ENCODE measurements at regions of chrX and their contacts with region 1.

Region 1: DNA sequence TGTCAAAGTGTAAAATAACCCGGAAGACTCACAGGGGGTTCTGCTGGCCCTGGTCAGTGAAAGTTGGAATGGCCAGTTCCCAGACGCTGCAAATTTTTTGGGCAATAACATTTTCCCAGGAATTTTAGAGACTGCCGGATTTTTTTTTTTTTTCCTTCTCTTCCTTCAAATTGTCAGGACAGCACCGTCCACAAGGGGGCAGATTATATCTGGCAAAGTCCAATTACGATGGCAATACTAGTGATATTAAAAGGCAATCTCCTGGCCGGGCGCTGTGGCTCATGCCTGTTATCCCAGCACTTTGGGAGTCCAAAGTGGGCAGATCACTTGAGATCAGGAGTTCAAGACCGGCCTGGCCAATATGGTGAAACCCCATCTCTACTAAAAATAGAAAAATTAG is 20.5 kb downstream of the SLC25A5 start:
- DNase-seq: peak; percentile 41 to 58
- H3K4me3 ChIP-seq: no peak overlapping the region
- H3K27ac ChIP-seq: no peak overlapping the region
- H3K4me1 ChIP-seq: no peaks in the 10 kb centered on the region
- H3K27me3 ChIP-seq: no peaks in the 10 kb centered on the region
- CTCF ChIP-seq: peak; percentile 86

Region 2: GRCh38 chrX:119410027-119410823 is 78.5 kb before region 1 on chrX:
- CTCF ChIA-PET with region 1: no interaction called
- POLR2A ChIA-PET with region 1: no interaction called
- intact Hi-C with region 1: no loop called
- DNase-seq: peak; percentile 92 to 94
- H3K4me3 ChIP-seq: no peak overlapping the region
- H3K27ac ChIP-seq: peak overlapping the region; percentile 73
- H3K4me1 ChIP-seq: peaks cover 31% of the 10 kb centered on the region
- H3K27me3 ChIP-seq: no peaks in the 10 kb centered on the region
- CTCF ChIP-seq: no peak

Region 3: GRCh38 chrX:119502727-119503483 is 14.2 kb after region 1 on chrX:
- CTCF ChIA-PET with region 1: interaction called, 19 read pairs
- POLR2A ChIA-PET with region 1: interaction called, 16 read pairs
- intact Hi-C with region 1: no loop called
- DNase-seq: peak; percentile 78 to 86
- H3K4me3 ChIP-seq: peak overlapping the region; percentile 43; the same call in 1 of the 2 replicates
- H3K27ac ChIP-seq: peak overlapping the region; percentile 95
- H3K4me1 ChIP-seq: peaks cover 49% of the 10 kb centered on the region
- H3K27me3 ChIP-seq: no peaks in the 10 kb centered on the region
- CTCF ChIP-seq: no peak; the same call in 1 of the 2 replicates